ENCODE measurements at regions of chr12 and their contacts with region 1.

Region 1: GRCh38 chr12:76031537-76032073 is at the start of gene PHLDA1:
- DNase-seq: peak; percentile 96
- ATAC-seq: peak; percentile 90 to 97 (median 94)
- H3K4me3 ChIP-seq: peak within 1 kb of the TSS; percentile 63 to 91 (median 80)
- H3K27ac ChIP-seq: peak within 1 kb of the TSS; percentile 90 to 99 (median 96)
- H3K4me1 ChIP-seq: peaks cover 0 to 48% (median 21%) of the 10 kb centered on the region in 9 donors
- H3K27me3 ChIP-seq: peaks cover 0 to 21% (median 0%) of the 10 kb centered on the region in 7 donors
- CTCF ChIP-seq: peak; percentile 26 to 82 (median 64)
- total RNA-seq, gene PHLDA1: 1.5 to 43.5 (median 23.3) TPM

Region 2: DNA sequence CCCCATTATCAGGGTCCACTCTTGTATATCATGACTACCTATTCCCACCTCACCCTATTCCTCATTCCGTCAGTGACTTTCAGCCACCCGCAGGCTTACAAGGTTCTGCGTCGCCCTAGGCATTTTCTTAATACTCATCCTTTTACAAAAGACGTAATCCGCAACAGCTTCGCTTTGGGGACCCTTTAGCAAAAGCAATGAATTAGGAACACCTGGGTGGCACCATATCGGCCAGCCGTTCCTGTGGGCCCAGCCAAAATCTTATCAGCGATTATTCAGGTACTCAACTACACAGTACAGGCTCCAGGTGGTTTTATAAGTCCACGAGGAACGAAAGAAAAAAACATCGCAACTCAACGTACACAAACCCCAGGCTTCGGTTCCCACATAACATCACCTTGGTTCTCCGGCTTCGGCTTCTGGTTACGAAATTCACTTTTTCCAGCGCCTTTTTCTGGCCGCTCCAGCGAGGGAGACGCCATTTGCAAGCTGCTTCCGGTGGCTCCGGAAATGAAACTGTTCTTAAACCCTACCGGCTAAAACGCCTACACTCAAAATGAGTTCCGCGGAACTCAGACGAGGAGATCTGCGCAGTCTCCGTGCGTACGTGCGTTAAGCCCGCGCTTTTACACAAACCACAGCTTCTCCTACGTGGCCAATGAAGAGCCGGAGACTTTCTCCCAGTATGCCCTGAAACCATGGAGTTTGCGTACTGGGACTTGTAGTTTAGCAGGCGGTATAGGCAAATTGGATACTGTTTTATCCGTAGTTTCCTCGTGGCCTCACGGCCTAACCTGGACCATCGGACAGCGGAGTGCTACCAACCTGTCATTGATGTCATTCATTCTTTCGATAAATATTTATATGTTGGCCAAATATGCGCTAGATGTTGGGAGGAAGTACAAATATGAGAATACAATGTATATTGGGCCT is 520.2 kb before region 1 on chr12 and contains the start of gene KRR1:
- intact Hi-C with region 1: loop called in 2 of 10 experiments (anchors 5 kb)
- DNase-seq: peak; percentile 84 to 95
- ATAC-seq: peak; percentile 99 to 100 (median 100)
- H3K4me3 ChIP-seq: peak within 1 kb of the TSS; percentile 72 to 98 (median 78)
- H3K27ac ChIP-seq: peak within 1 kb of the TSS in 9 of 10 donors; percentile 46 to 85 (median 73)
- H3K4me1 ChIP-seq: peaks cover 0 to 32% (median 28%) of the 10 kb centered on the region in 9 donors
- H3K27me3 ChIP-seq: no peaks in the 10 kb centered on the region
- CTCF ChIP-seq: peak in 1 of 9 donors; percentile 23
- total RNA-seq, gene KRR1: 29.2 to 44.2 (median 33.1) TPM

Region 3: DNA sequence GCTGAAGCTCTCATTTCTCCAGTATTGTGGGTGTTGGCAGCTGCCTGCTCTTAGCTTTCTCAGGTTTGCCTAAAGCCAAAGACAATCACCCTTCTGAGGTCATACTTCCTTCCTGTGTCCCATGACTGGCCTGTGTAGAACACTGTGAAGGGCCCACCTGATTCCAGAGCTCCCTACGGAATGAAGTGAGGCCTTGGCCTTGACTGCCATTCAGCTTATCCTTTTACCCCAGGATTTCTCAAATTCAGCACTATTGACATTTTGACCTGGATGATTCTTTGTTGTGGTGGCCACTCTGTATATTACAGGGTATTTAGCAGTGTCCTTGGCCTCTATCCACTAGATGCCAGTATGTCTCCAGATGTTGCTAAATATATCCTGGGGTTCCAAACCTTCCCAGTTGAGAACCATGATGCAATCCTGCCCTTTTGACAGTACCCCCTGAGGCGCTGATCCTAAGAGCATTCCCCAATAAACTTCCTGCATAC is 407.9 kb before region 1 on chr12:
- intact Hi-C with region 1: loop called in 7 of 10 experiments (anchors 5 to 10 kb)
- DNase-seq: no peak
- ATAC-seq: peak; percentile 71 to 96 (median 87)
- H3K4me3 ChIP-seq: no peak overlapping the region
- H3K27ac ChIP-seq: peak overlapping the region in 3 of 10 donors; percentile 5 to 39 (median 13)
- H3K4me1 ChIP-seq: peaks cover 0 to 9% (median 7%) of the 10 kb centered on the region in 9 donors
- H3K27me3 ChIP-seq: no peaks in the 10 kb centered on the region
- CTCF ChIP-seq: peak in 8 of 9 donors; percentile 15 to 52 (median 32)

Region 4: DNA sequence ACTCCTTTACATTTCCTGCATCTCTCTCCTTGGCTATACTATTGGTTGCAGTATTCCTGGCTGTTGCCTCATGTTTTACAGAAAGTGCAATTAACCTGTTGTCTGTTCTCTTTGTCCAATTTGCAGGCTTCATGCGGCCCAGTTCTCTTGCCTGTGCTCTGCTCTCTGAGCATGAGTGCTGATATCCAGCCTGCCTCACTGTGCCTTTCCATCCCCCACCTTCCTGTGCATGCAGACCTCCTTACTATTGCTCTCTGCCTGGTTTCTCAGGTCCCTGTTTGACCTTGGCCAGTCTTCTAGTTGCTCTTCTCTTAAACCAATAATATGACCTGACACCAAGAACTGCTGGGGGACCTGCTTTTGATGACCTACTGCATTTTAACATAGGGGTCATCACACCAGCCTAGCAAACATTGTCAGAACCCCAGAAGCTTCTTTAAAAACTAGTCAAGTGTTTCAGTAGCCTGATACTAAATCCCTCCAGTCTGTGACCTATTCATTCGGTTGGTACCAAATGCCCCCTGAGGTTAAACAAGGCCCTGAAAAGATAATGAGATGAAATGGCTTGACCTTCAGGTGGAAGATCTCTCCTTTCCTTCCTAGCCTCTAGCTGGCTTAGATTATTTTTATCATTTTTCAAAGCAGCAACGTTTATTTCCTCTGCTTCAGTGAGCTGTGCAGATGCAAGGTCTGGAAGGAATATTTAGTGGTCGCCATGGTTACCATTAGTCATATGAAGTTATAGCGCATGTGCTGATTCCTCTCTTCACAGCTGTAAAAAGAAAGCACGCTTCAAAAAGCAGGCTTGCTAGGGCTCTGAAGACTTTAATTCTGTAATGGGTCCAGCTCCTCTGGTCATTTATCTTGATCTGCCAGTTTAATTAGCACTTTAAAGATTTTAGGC is 216.5 kb before region 1 on chr12:
- intact Hi-C with region 1: loop called in 5 of 10 experiments (anchors 5 to 10 kb)
- DNase-seq: peak in 1 of 2 donors; percentile 55
- ATAC-seq: peak; percentile 65 to 95 (median 94)
- H3K4me3 ChIP-seq: no peak overlapping the region
- H3K27ac ChIP-seq: peak overlapping the region in 8 of 10 donors; percentile 31 to 70 (median 52)
- H3K4me1 ChIP-seq: peaks cover 0 to 24% (median 11%) of the 10 kb centered on the region in 9 donors
- H3K27me3 ChIP-seq: no peaks in the 10 kb centered on the region
- CTCF ChIP-seq: no peak

Region 5: DNA sequence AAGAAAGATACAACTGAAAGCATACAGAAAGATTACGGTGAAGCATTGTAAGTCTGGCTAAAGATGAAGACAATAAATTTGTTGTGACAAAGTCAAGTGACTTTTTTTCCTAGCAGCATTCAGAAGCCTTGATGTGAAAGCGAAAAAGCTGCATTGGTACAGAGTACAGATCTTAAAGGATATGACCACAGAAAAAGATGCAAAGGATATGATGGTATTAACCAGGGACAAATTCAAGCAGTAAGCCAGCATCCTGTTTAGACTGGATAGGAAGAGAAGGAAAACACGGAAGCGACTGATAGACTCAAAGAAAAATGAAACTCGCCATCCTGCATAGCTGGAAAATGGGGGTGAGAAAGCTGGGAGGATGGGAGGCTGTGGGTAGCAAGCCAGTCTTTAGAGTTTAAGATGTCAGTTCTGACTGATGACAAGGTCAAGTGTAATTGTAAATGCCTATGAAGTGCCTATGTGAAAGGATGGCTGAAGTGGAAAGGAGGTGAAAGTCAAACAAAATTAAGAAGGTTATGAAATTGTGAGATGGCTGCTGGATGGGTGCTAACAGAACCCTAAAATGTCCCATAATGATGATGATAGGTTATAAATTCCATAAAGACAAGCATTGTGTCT is 92.5 kb before region 1 on chr12:
- intact Hi-C with region 1: loop called in 5 of 10 experiments (anchors 5 to 10 kb)
- DNase-seq: no peak
- ATAC-seq: peak in 1 of 8 donors; percentile 25
- H3K4me3 ChIP-seq: no peak overlapping the region
- H3K27ac ChIP-seq: no peak overlapping the region
- H3K4me1 ChIP-seq: peaks cover 0 to 35% (median 20%) of the 10 kb centered on the region in 9 donors
- H3K27me3 ChIP-seq: no peaks in the 10 kb centered on the region
- CTCF ChIP-seq: no peak

Region 6: DNA sequence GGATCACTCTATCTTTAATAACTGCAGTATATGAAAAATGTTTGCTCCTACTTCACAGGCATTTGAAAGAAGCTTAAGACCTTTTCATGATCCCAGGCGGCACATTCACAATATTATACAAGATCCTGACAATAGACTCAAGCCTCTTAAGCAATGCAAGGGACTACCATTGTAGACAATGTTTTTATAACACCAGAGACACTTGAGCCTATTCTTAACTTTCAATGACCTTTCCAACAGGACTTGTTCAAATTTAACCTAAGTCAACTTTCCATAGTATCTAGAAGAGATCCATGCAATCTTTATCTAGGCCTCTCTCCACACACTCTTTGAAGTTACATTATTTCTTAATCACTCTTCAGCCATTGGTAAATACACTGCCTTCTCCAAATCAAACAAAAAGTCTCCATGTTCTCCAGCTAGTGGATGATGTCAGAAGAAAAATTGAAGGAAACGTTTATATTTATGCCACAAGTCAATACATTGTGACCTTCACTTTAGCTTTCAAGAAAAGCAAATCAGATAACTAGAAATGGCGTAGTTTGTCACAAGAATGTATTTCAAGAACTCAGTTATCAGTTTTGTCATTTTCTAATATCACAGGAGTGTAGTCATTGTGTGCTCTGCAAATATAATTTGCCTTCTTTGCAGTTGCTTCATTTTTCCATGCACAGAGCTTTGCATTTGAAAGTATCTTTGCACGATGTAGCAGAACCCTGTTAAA is 41.3 kb before region 1 on chr12:
- intact Hi-C with region 1: no loop called
- DNase-seq: no peak
- ATAC-seq: no peak
- H3K4me3 ChIP-seq: no peak overlapping the region
- H3K27ac ChIP-seq: no peak overlapping the region
- H3K4me1 ChIP-seq: no peaks in the 10 kb centered on the region
- H3K27me3 ChIP-seq: no peaks in the 10 kb centered on the region
- CTCF ChIP-seq: no peak

Measured in heart right ventricle (tissue), 16 donors.